ENCODE measurements at regions of chr5 and their contacts with region 1.

Region 1: GRCh38 chr5:151825445-151825844 is 53.7 kb downstream of the G3BP1 start:
- DNase-seq: no peak

Region 2: DNA sequence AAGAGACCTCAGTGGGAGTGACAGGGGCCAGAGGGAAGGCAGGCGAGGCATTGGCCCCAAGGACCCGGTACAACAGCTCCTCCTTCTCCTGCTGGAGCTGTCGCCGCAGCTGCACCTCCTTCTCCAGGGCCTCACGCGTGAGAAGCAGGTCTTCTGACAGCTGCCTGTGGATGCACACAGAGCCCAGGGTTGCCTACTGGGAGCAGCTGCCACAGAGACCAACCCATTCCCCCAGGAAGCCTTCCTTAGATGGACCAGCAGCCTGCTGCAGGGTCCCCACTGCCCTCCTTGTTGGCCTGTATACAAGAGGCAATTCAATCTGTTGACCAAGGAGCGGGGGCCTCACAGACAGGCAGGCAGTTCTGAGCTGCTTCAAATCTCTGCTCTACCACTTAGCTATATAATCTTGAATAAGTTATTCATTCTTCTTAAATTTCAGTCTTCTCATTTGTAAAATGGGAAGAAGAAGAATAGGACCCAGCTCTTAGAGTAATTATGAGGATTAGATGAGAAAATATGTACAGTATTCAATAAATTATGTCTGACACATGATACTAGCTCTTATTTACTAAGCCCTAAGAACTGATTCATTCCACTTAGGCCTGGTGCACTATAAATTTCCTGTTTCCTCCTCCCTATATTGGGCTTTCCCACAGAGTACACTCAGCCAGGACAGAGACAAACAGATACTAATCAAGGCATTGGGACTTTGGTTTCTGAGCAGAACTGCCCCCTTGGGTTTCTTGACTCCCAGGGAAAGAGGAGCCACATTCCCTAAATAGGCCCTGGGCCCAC is 641.8 kb before region 1 on chr5:
- intact Hi-C with region 1: no loop called
- DNase-seq: no peak

Region 3: DNA sequence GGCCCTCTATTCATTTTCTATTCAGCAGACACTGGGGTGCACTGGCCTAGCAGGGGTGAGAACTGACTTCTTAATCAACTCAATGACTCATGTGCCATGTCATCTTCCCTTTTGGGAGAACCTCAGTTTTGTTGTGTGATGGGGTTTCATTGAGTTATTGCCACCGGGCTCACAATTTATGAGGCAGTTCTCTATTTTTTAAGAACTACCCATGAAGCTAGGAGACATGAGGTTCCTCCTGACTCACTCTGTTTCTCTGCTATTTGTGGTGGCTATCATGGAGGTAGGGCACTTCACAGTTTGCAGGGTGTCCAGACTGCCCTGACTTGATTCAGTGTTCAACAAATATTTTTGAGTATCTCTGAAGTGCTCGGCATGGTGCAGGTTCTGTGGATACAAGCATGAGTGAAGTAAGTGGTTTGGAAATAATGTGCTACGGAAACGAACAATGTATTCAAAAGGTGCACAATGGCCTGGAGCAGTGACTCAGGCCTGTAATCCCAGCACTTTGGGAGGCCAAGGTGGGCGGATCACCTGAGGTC is 178.1 kb before region 1 on chr5:
- intact Hi-C with region 1: no loop called
- DNase-seq: no peak

Region 4: DNA sequence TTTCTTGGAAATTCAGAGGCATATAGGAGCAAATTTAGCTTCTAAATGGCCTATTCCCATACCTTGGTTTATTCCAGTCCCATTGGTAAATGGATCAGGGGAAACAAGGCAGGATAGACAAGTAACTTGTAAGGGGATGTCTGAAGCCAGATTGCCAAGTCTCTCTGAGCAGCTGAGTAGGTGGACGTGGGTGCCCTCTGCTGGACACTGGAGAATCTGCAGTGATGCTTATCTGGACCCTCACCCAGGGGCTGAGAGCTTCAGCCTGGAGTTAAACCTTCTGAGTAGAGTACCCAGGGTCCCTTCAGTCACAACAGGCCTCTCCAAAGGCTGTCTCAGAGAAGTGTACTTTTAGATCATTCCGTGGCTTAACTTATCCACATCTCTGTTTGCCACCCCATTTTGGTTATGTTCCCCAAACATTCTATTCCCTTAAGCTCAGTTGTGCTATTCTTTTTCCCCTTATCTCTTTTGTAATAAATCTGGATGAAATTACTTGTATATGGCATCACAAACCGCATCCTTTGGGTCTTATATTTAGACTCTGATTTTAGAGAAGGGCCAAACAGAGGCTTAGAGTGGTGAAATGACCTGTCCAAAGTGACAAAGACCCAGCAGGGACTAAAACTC is 317.5 kb after region 1 on chr5:
- intact Hi-C with region 1: loop called (anchors 2 kb)
- DNase-seq: no peak

Region 5: GRCh38 chr5:152271420-152271819 is 446.0 kb after region 1 on chr5:
- intact Hi-C with region 1: loop called (anchors 5 kb)
- DNase-seq: no peak

Region 6: DNA sequence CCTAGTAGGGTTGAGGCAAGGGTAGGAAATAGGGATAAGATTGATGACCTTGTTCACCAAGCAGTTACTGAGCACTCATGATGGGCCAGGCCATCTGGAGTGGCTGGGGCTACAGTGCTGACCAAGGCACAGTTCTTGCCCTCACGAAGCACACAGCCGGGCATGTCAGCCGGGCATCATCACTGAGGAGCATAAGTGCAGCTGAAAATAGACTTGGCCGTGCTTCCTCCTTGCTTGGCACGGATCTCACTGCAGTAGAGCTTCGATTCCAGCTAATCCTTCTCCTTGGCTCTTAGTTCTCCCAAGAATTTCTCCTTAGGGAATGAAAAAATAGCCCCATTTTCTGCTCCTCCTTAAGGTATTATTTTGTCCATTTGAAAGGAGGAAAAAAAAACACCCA is 463.1 kb after region 1 on chr5:
- intact Hi-C with region 1: loop called (anchors 5 kb)
- DNase-seq: peak; percentile 77

Region 7: GRCh38 chr5:152349683-152350526 is 524.5 kb after region 1 on chr5:
- intact Hi-C with region 1: loop called (anchors 5 kb)
- DNase-seq: no peak

Region 8: DNA sequence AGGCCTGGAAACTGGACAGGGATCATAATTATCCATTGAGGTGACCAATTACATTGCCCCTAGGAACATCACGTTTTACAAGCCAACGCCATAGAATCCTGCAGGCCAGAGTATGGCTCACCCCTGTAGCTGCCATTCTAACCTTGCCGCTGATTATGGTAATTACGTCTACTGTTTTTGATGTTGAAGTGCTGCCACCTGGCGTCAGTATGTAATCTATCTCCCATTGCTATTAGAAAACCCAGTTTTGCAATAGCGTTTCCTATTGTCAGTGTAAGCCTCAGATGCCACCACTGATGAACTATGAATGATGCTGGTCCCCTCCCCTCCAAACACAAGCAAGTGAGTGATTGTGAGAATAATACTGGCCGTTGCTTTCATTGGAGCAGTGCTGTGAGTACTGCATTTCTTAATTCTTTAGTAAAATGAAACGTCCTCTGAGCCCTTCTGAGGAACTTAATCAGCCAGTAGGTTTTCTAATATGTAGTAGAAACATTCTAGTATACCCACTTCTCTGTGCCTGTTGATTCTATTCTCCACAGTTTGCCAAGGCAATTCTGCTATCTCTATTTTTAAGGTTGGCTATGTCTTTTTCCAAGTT is 680.1 kb after region 1 on chr5:
- intact Hi-C with region 1: loop called (anchors 2 kb)
- DNase-seq: no peak

Measured in cardiac septum (tissue), 1 donor.